ENCODE measurements at regions of chr1 and their contacts with region 1.

Region 1: GRCh38 chr1:101506541-101507164 is 269.8 kb downstream of the S1PR1 start:
- DNase-seq: no peak
- H3K4me3 ChIP-seq: no peak overlapping the region
- H3K27ac ChIP-seq: no peak overlapping the region
- H3K27me3 ChIP-seq: no peaks in the 10 kb centered on the region
- CTCF ChIP-seq: peak; percentile 79

Region 2: GRCh38 chr1:101112051-101112780 is 394.4 kb before region 1 on chr1:
- CTCF ChIA-PET with region 1: no interaction called
- POLR2A ChIA-PET with region 1: no interaction called
- DNase-seq: no peak
- H3K4me3 ChIP-seq: no peak overlapping the region
- H3K27ac ChIP-seq: no peak overlapping the region
- H3K27me3 ChIP-seq: no peaks in the 10 kb centered on the region
- CTCF ChIP-seq: no peak

Region 3: DNA sequence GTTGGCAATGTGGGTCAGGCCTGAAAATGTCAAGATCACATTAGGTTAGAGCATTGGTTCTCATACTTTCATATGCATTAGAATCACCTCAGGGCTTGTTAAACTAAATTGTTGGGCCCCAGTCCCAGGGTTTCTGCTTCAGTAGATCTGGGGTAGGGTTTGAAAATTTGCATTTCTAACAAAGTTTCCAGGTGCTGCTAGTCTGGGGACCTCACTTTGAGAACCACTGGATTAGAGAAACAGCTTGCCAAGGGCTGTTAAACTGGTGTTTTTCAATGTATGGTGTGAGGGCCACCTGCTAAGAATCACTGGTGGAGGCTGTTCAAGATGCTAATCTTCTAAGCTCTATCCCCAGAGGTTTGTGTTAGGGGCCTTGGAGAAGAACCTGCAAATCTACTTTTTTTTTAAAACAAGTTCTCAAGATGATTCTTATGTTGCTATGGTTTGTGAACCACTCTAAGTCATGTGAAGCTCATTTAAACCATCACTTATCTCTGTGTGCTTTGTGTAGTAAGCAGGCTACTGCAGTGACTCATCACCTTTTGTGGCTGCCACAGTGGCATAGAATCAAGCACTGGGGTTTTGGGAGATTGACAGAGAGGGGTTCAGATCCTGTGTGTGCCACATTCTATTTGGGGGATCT is 117.6 kb before region 1 on chr1:
- CTCF ChIA-PET with region 1: no interaction called
- POLR2A ChIA-PET with region 1: no interaction called
- DNase-seq: no peak
- H3K4me3 ChIP-seq: no peak overlapping the region
- H3K27ac ChIP-seq: no peak overlapping the region
- H3K27me3 ChIP-seq: no peaks in the 10 kb centered on the region
- CTCF ChIP-seq: no peak

Region 4: GRCh38 chr1:101448018-101448417 is 58.6 kb before region 1 on chr1:
- CTCF ChIA-PET with region 1: no interaction called
- POLR2A ChIA-PET with region 1: no interaction called
- DNase-seq: no peak
- H3K4me3 ChIP-seq: no peak overlapping the region
- H3K27ac ChIP-seq: no peak overlapping the region
- H3K27me3 ChIP-seq: no peaks in the 10 kb centered on the region
- CTCF ChIP-seq: no peak

Region 5: GRCh38 chr1:101474039-101474665 is 32.5 kb before region 1 on chr1:
- CTCF ChIA-PET with region 1: interaction called, 12 read pairs
- POLR2A ChIA-PET with region 1: no interaction called
- DNase-seq: no peak
- H3K4me3 ChIP-seq: no peak overlapping the region
- H3K27ac ChIP-seq: no peak overlapping the region
- H3K27me3 ChIP-seq: no peaks in the 10 kb centered on the region
- CTCF ChIP-seq: peak; percentile 37

Region 6: GRCh38 chr1:101484689-101485338 is 21.8 kb before region 1 on chr1:
- CTCF ChIA-PET with region 1: interaction called, 11 read pairs
- POLR2A ChIA-PET with region 1: no interaction called
- DNase-seq: no peak
- H3K4me3 ChIP-seq: no peak overlapping the region
- H3K27ac ChIP-seq: no peak overlapping the region
- H3K27me3 ChIP-seq: no peaks in the 10 kb centered on the region
- CTCF ChIP-seq: no peak

Region 7: DNA sequence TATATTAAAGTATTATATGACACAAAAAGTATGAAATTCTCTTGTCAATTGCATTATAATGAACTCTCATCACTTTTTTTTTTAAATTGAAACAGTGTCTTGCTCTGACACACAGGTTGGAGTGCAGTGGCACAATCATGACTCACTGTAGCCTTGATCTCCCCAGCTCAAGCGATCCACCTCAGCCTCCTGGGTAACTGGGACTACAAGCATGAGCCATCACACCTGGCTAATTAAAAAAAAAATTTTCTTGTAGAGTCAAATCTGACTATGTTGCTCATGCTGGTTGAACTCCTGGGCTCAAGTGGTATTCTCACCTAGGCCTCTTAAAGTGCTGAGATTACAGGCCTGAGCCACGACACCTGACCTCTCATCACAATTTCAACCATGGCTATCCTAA is 10.5 kb before region 1 on chr1:
- CTCF ChIA-PET with region 1: interaction called, 16 read pairs
- POLR2A ChIA-PET with region 1: no interaction called
- DNase-seq: no peak
- H3K4me3 ChIP-seq: no peak overlapping the region
- H3K27ac ChIP-seq: no peak overlapping the region
- H3K27me3 ChIP-seq: no peaks in the 10 kb centered on the region
- CTCF ChIP-seq: no peak

Measured in AG04450 (cell line).